Activated T-helper 2 cell treated with anti-CD3 and anti-CD28 coated beads, Interferon-gamma antibody, Interleukin-2, Interleukin-4, amounts not matched to agents 10 μg/mL and 5 μg/mL and 100 μg/mL, durations not matched to agents 14 hours and 24 hours and 36 hours (primary cell): ENCODE measurements at regions of chr2 and their contacts with region 1.

Region 1: DNA sequence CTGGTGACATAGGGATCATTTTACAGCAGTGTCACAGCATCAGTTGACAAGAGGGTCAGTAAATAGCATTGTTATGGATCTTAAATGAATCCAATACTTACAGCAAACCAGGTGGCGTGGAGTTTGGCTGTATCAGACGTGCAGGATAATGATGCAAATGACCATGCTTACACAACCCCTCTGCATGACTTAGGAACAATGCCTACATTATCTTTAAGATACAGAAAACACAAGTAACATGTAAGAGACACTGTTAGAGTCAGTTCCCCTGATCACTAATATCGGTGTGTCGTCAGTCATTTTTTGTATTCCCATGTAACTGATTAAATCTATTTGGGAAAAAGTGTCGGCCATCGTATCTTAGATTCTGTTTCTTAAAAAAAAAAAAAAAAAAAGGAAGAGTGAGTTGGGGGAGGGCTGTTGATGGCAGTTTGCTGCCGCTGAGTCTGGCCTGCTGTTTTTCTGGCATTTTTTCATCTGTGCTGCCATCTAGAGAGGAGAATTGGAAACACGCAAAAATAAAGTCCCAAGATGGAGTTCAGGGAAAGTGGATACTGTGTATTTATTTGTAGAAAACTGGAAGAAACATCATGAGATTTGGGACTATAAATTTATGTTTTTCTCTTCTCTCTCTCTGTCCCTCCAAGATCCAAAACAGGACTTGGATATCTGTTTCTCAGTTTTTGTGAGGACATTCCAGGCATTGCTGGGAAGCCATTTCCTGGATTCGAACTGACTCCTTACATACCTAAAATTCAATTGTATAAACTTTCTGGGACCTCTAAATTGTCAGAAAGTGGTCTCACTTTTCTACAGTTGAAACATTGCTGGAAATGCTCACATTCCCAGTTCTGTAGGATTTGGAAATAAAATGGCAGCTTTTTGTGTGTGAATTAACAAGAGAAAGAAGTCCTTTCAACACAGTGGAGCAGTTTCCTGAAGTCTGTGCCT is 60.3 kb upstream of the AGPS start:
- DNase-seq: peak; percentile 36
- H3K4me3 Mint-ChIP-seq: no peak overlapping the region
- H3K27ac Mint-ChIP-seq: no peak overlapping the region
- H3K4me1 Mint-ChIP-seq: peaks cover 14% of the 10 kb centered on the region
- H3K27me3 Mint-ChIP-seq: no peaks in the 10 kb centered on the region

Region 2: GRCh38 chr2:177164584-177165052 is 167.7 kb before region 1 on chr2:
- intact Hi-C with region 1: loop called (anchors 1 kb)
- DNase-seq: peak; percentile 65
- H3K4me3 Mint-ChIP-seq: no peak overlapping the region
- H3K27ac Mint-ChIP-seq: no peak overlapping the region
- H3K4me1 Mint-ChIP-seq: peaks cover 28% of the 10 kb centered on the region
- H3K27me3 Mint-ChIP-seq: peaks cover 6% of the 10 kb centered on the region

Region 3: DNA sequence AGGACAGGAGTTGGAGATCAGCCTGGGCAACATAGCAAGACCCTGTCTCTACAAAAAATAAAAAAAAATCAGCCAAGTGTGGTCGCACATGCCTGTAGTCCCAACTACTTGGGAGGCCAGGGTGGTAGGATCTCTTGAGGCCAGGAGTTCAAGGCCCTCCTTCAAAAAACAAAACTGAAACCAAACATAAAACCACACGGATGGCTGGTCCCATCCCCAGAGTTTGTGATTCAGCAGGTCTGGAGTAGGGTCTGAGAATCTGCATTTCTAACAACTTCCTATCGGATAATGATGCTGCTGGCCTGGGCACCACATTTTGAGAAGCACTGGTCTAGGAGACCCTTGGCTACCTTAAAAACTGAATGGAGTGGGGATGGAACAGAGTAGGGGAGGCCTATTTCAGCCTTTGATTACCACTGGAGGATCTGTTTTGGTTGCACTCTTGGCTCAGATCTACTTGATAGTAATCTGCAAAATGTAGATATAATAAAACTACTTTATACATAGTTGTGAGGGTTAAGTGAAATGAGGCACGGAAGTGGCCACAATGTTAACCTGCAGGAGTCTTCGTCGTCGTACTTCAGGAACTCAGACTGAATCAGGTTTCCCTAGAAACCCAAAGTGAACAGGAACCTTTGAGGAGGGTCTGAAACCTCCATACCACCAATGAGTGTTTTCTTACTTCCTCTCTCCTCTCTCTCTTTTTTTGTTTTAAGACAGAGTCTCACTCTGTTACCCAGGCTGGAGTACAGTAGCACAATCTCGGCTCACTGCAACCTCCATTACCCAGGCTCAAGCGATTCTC is 42.3 kb before region 1 on chr2:
- intact Hi-C with region 1: loop called (anchors 2 kb)
- DNase-seq: peak; percentile 37
- H3K4me3 Mint-ChIP-seq: peak overlapping the region; percentile 61
- H3K27ac Mint-ChIP-seq: peak overlapping the region; percentile 79
- H3K4me1 Mint-ChIP-seq: peaks cover 46% of the 10 kb centered on the region
- H3K27me3 Mint-ChIP-seq: no peaks in the 10 kb centered on the region

Region 4: GRCh38 chr2:177419274-177419673 is 87.0 kb after region 1 on chr2:
- intact Hi-C with region 1: loop called (anchors 1 kb)
- DNase-seq: no peak
- H3K4me3 Mint-ChIP-seq: no peak overlapping the region
- H3K27ac Mint-ChIP-seq: no peak overlapping the region
- H3K4me1 Mint-ChIP-seq: peaks cover 28% of the 10 kb centered on the region
- H3K27me3 Mint-ChIP-seq: no peaks in the 10 kb centered on the region

Region 5: GRCh38 chr2:177618255-177619253 is 286.2 kb after region 1 on chr2:
- intact Hi-C with region 1: loop called (anchors 5 kb)
- DNase-seq: peak; percentile 88
- H3K4me3 Mint-ChIP-seq: peak overlapping the region; percentile 92
- H3K27ac Mint-ChIP-seq: peak overlapping the region; percentile 97
- H3K4me1 Mint-ChIP-seq: peaks cover 4% of the 10 kb centered on the region
- H3K27me3 Mint-ChIP-seq: peaks cover 27% of the 10 kb centered on the region

Region 6: GRCh38 chr2:177763532-177764265 is 431.4 kb after region 1 on chr2:
- intact Hi-C with region 1: loop called (anchors 1 kb)
- DNase-seq: peak; percentile 57
- H3K4me3 Mint-ChIP-seq: no peak overlapping the region
- H3K27ac Mint-ChIP-seq: no peak overlapping the region
- H3K4me1 Mint-ChIP-seq: peaks cover 3% of the 10 kb centered on the region
- H3K27me3 Mint-ChIP-seq: peaks cover 26% of the 10 kb centered on the region